ENCODE measurements at regions of chr21 and their contacts with region 1.

Region 1: DNA sequence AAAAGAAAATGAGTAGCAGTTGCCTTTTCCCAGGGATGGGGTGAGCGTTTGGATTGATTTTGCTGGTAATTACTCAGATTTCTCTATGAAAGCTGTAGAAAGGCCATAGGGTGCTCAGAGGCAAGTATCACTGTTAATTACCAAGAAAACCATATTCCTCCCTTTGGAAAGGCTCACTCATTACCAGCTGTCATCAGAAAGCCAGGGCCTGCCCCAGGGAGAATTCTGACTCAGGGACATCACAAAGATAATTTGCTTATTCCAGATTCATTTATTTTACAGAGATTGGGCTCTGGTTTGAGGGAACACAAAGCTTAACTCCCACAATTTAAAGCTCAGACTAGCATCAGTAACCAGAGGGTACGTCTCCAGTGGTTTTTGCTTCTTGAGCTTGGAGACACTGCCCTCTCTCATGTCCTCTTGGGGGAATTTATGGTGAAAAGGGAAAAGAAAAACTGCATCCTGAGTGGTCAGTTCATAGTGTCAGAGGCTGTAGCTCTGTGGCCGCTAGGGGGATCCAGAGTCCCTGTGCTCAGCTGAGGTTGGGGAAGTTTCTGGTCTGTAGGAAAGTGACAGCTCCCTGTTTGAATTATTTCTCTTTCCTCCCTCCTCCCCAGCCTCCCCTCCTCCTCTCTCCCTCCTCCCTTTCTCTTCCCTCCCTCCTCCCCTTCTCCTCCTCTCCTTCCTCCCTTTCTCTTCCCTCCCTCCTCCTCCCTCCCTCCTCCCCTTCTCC is 204.3 kb downstream of the KCNJ6 start:
- DNase-seq: peak; percentile 92

Region 2: GRCh38 chr21:36668713-36669112 is 1043.3 kb before region 1 on chr21:
- intact Hi-C with region 1: loop called in 1 of 2 experiments (anchors 5 kb)
- DNase-seq: no peak

Region 3: GRCh38 chr21:37916310-37917051 is 204.5 kb after region 1 on chr21 and contains the start of gene KCNJ6:
- intact Hi-C with region 1: loop called in 1 of 2 experiments (anchors 10 kb)
- DNase-seq: no peak
- total RNA-seq, gene KCNJ6: not detected

Measured in posterior vena cava (tissue), 2 donors.